Endothelial cell of umbilical vein (primary cell): ENCODE measurements at regions of chr14 and their contacts with region 1.

Region 1: DNA sequence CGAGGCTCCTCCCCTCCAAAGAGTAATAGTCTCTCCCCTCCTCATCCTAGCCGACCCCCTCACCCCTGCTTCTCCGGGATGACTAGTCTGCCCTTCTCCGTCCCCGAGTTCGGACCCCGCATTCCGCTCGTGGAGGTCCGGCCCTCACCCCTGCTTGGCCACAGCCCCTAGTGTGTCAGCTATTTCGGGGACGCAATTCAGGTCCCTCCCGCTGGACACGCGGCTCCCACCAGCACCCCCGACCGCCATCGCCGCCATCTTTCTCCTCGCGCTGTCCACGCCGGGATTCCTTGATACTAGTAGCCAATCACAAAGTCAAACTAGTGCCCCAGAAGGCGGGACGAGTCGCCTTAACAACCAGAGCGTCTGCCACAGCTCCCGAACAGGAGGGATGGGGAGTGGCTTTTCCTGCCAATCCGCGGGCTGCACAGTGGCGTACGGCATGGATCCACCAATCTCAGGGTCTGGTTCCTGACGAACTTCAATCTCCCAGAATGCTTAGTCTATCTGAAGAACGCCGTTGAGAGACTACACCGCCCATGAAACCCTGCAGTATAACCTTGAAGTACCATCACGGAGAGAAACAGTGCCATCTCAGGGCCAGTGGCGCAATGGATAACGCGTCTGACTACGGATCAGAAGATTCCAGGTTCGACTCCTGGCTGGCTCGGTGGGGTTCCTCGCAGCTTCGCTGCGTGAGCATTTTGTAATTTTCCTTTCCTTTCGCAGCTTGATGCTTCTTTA is at the start of gene PRMT5:
- DNase-seq: peak; percentile 100
- H3K4me3 ChIP-seq: peak within 1 kb of the TSS; percentile 66 to 95 (median 81)
- H3K27ac ChIP-seq: peak within 1 kb of the TSS; percentile 68
- H3K4me1 ChIP-seq: peaks cover 16% of the 10 kb centered on the region
- H3K27me3 ChIP-seq: no peaks in the 10 kb centered on the region
- CTCF ChIP-seq: no peak
- POLR2A ChIP-seq: peak; percentile 64
- total RNA-seq, gene PRMT5: 67.2 and 73.1 TPM in 2 replicates

Region 2: GRCh38 chr14:22589096-22589839 is 340.0 kb before region 1 on chr14 and contains the start of gene DAD1:
- CTCF ChIA-PET with region 1: no interaction called
- POLR2A ChIA-PET with region 1: no interaction called
- dilution Hi-C with region 1: no loop called
- intact Hi-C with region 1: loop called (anchors 2 kb)
- DNase-seq: peak; percentile 100
- H3K4me3 ChIP-seq: peak within 1 kb of the TSS; percentile 70 to 99 (median 92)
- H3K27ac ChIP-seq: peak within 1 kb of the TSS; percentile 84
- H3K4me1 ChIP-seq: peaks cover 23% of the 10 kb centered on the region
- H3K27me3 ChIP-seq: peaks cover 3 to 4% of the 10 kb centered on the region in 2 experiments
- CTCF ChIP-seq: no peak
- POLR2A ChIP-seq: peak; percentile 98
- total RNA-seq, gene DAD1: 299 and 304 TPM in 2 replicates

Region 3: GRCh38 chr14:22939684-22940083 is 10.4 kb after region 1 on chr14:
- CTCF ChIA-PET with region 1: interaction called, 46 read pairs
- POLR2A ChIA-PET with region 1: interaction called, 5 read pairs
- dilution Hi-C with region 1: no loop called
- intact Hi-C with region 1: no loop called
- DNase-seq: no peak
- H3K4me3 ChIP-seq: no peak overlapping the region
- H3K27ac ChIP-seq: no peak overlapping the region
- H3K4me1 ChIP-seq: no peaks in the 10 kb centered on the region
- H3K27me3 ChIP-seq: no peaks in the 10 kb centered on the region
- CTCF ChIP-seq: no peak
- POLR2A ChIP-seq: no peak

Region 4: GRCh38 chr14:22973217-22974032 is 44.1 kb after region 1 on chr14:
- CTCF ChIA-PET with region 1: interaction called, 16 read pairs
- POLR2A ChIA-PET with region 1: interaction called, 5 read pairs
- dilution Hi-C with region 1: no loop called
- intact Hi-C with region 1: no loop called
- DNase-seq: peak; percentile 72
- H3K4me3 ChIP-seq: no peak overlapping the region
- H3K27ac ChIP-seq: no peak overlapping the region
- H3K4me1 ChIP-seq: peaks cover 31% of the 10 kb centered on the region
- H3K27me3 ChIP-seq: no peaks in the 10 kb centered on the region
- CTCF ChIP-seq: peak; percentile 53 to 54
- POLR2A ChIP-seq: no peak

Region 5: DNA sequence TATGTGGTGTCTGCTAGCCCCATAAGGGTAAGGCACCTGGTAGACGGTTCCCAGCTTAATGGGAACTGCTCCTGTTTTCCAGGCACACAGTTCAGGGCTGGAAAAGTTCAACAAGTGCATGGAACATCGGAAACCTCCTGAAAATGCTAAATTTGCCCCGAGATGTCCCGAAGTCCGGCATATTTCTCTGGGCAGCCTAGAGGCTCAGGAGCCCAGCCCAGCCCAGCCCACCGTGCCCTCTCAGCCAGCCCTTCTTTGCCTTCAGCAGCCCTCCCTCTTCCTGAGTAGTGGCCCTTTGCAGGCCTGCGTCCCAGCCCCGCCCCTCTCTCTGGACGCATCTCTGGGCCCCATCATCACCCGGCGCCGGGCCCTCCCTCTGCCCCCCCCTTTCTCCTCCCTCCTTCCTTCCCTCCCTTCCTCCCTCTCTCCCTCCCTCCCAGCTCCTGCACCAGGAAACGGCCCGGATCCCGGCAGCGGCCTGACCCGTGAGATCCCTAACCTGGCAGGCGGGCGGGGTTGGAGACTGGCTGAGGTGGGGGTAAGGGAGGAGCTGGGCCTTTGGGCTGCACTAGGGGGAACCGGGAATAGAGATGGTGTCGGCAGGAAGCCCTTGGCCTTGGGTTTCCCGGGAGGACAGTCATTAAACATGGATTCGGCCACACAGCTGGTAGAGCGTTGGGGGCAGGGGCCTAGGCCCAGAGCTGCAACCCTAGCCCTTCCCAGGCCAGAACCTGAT is 377.3 kb after region 1 on chr14 and contains the start of gene BCL2L2:
- CTCF ChIA-PET with region 1: no interaction called
- POLR2A ChIA-PET with region 1: no interaction called
- dilution Hi-C with region 1: no loop called
- intact Hi-C with region 1: loop called (anchors 2 kb)
- DNase-seq: peak; percentile 92
- H3K4me3 ChIP-seq: peak within 1 kb of the TSS; percentile 84 to 92 (median 89)
- H3K27ac ChIP-seq: peak within 1 kb of the TSS; percentile 78
- H3K4me1 ChIP-seq: peaks cover 27% of the 10 kb centered on the region
- H3K27me3 ChIP-seq: no peaks in the 10 kb centered on the region
- CTCF ChIP-seq: no peak
- POLR2A ChIP-seq: peak; percentile 75
- total RNA-seq, gene BCL2L2: 24.3 and 26.2 TPM in 2 replicates

Region 6: DNA sequence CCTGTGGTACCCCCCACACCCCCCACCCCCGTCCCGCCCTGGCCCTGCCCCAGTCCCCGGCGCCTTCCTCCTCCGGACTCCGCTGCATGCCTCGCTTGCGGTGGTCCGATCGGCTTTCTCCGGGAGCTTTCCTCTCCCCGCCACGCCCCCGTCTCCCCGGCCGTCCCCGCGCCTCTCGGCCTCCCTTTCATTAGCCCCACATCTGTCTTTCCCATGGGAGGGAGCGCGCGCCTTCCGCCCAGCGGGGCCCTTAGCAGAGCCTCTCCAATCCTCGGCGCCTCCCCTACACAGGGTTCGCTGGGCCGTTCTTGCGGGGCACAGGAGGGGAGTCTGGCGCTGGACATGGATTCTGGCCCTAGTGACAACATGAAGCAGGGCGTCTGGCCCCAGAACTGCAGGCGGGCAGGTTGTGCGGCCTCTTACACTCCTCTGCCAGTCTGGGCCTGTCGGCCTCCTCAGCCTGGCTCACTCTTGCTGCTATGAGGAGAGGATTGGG is 437.2 kb after region 1 on chr14:
- CTCF ChIA-PET with region 1: no interaction called
- POLR2A ChIA-PET with region 1: no interaction called
- dilution Hi-C with region 1: no loop called
- intact Hi-C with region 1: no loop called
- DNase-seq: no peak
- H3K4me3 ChIP-seq: no peak overlapping the region
- H3K27ac ChIP-seq: no peak overlapping the region
- H3K4me1 ChIP-seq: no peaks in the 10 kb centered on the region
- H3K27me3 ChIP-seq: peaks cover 42 to 47% of the 10 kb centered on the region in 2 experiments
- CTCF ChIP-seq: no peak
- POLR2A ChIP-seq: no peak